Head of caudate nucleus (tissue), 42 donors: ENCODE measurements at regions of chr17 and their contacts with region 1.

Region 1: GRCh38 chr17:7687908-7688807 is at the start of gene WRAP53:
- DNase-seq: peak; percentile 95 to 99 (median 98)

Region 2: DNA sequence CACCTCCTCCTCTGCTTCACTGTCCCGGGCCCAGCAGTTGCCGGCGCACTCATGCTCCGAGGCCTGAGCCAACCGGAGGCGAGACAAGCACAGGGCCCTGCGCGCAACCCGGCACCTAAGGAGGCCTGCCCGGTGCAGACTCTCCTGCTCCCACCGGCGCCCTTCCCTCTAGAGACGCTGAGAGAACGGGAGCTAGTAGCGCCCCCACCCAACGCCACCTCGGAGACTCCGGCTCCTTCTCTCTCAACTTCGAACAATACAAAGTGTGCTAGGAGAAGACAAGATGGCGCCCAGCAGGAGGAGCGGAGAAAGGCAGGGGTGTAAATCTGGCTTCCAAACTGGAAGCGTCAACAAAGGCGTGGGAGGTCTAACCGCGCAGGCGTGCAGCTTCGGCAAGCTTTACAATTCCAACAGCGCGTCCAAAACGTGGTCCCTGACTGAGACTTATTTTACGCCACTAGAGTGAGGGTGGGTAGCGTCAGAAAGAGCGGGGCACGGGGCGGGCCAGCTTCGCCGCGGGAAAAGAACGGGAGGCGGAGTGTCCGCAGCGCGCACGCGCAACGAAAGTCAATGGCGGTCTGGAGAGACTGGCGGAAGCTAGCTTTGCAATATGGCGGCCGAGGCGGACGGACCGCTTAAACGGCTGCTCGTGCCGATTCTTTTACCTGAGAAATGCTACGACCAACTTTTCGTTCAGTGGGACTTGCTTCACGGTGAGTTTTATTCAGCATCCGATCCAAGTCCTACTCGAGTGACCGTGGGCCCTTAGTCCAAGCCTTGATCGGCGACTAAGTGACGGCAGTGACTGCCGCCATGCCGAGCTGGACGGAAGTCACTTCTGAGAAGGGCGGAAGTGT is 104.7 kb before region 1 on chr17 and contains the start of gene MPDU1:
- intact Hi-C with region 1: loop called (anchors 10 kb)
- DNase-seq: peak; percentile 90 to 99 (median 96)

Region 3: DNA sequence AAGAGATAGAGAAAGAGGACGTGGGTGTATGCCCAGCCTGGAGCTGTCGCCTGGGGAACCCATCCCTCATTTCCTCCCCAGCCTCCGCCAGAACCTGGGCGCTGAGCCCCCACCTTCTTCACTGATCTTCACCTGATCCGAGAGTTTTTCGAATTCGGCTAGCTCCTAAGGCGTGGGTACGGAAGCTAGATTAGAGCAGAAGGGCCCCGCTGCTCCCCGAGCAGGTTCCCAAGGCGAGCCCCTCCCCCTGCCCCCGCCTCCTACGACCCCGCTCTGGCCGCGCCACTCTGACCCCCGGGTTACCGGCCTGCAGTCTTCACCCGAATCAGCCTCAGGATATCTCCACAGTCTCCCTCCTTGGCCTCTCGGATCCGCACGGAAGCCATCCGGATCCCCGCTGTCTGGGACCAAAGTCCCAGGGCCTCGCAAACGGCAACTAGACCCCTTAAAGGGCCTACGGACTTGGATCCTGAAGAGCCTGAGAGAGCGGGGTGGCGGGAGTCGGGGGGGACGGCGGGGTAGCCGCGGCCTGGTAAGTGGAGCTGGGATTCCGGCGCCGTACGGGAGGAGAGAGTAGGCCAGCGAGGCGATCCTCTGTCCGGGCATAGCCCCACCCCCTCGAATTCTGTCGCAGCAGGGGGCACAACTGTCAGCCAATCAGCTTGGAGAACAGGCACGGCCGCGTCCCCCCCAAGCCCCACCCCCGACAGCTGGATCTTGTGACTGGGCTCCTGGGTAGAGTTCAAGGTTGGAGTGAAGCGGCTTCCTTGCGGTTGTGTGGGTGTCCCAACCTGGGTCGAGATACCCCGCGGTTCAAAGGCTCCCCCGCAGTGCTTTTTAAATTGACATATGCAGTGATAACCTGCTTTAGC is 60.7 kb before region 1 on chr17 and contains the start of gene SAT2:
- intact Hi-C with region 1: loop called (anchors 5 kb)
- DNase-seq: peak; percentile 87 to 98 (median 96)

Region 4: DNA sequence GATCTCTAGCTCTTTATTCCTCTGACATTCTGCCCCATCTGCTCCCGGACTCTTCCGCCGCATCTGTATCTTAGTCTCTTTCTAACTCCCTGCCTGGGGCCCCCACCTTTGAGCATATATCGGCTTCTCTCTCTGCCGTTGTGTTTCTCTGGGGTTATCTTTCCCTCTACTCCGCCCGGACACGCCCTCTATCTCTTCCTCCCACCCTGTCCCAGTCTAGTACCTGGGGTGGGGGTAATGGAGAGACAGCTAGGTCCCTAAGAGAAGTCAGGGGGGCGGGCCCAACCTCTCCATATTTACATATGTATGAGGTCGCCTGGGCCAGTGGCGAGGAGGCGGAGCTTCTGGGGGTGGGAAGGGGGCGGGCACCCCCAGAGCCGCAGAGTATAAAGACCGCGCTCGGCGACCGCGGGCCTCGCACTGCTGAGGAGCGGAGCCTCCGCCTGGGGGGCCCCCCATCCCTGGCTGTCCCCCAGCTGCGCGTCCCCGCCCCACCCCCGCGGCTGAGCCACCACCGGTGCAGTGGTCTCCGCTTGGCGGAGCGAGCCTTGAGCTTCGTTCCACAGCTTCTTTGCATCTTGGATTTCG is 37.6 kb before region 1 on chr17 and contains the start of gene ATP1B2:
- intact Hi-C with region 1: no loop called
- DNase-seq: peak; percentile 38 to 87 (median 71)